ENCODE measurements at regions of chr16 and their contacts with region 1.

Region 1: DNA sequence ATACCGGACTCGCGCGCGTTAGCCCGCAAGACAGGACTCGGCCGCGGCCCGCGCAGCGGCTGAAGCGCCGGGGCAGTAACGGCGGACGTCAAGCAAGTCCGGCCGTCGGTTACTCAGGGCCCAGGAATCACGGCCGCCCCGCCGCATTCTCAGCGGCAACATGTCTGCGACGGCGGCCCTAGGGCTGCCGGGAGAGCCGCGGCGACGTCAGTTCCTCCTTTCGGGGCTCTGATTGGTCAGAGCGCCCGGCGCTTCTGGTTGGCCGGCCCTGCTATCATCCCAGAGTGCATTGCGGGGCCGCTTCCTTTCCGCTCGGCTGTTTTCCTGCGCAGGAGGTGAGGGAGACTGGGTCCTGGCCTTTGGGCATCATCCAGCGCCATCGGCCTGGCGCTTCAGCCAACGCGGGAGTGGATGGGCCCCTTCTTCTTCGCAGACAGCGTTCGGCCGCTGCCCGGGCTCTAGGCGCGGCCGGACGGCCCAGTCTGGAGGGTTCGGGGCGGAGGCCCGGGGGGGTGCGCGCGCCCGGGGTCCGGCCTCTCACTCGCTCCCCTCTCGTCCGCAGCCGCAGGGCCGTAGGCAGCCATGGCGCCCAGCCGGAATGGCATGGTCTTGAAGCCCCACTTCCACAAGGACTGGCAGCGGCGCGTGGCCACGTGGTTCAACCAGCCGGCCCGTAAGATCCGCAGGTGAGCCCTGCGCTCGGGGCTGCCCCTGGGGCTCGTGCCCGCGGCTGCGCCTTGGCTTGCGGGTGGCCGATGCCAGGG is at the start of gene RPL13:
- DNase-seq: peak; percentile 95 to 97
- H3K4me3 ChIP-seq: peak within 1 kb of the TSS; percentile 78 to 86 (median 85)
- H3K27ac ChIP-seq: peak within 1 kb of the TSS; percentile 96 to 97
- H3K4me1 ChIP-seq: peaks cover 5 to 7% of the 10 kb centered on the region in 2 donors
- H3K27me3 ChIP-seq: no peaks in the 10 kb centered on the region
- CTCF ChIP-seq: peak in 1 of 3 donors; percentile 6
- POLR2A ChIP-seq: peak; percentile 95
- total RNA-seq, gene RPL13: 5,075 to 6,295 (median 5,484) TPM

Region 2: GRCh38 chr16:87661561-87661960 is 1899.0 kb before region 1 on chr16:
- intact Hi-C with region 1: loop called (anchors 5 kb)
- DNase-seq: no peak
- H3K4me3 ChIP-seq: no peak overlapping the region
- H3K27ac ChIP-seq: no peak overlapping the region
- H3K4me1 ChIP-seq: no peaks in the 10 kb centered on the region
- H3K27me3 ChIP-seq: peaks cover 0 to 51% of the 10 kb centered on the region in 2 donors
- CTCF ChIP-seq: no peak
- POLR2A ChIP-seq: no peak

Region 3: GRCh38 chr16:89507834-89508590 is 52.5 kb before region 1 on chr16 and contains the start of gene SPG7:
- intact Hi-C with region 1: loop called (anchors 10 kb)
- DNase-seq: peak; percentile 76 to 78
- H3K4me3 ChIP-seq: peak within 1 kb of the TSS; percentile 79 to 94 (median 80)
- H3K27ac ChIP-seq: peak within 1 kb of the TSS; percentile 87 to 93
- H3K4me1 ChIP-seq: peaks cover 9 to 17% of the 10 kb centered on the region in 2 donors
- H3K27me3 ChIP-seq: no peaks in the 10 kb centered on the region
- CTCF ChIP-seq: no peak
- POLR2A ChIP-seq: no peak
- total RNA-seq, gene SPG7: 104 to 126 (median 118) TPM

Region 4: GRCh38 chr16:89860747-89861304 is 300.3 kb after region 1 on chr16:
- intact Hi-C with region 1: loop called (anchors 5 kb)
- DNase-seq: peak in 1 of 2 donors; percentile 70
- H3K4me3 ChIP-seq: no peak overlapping the region
- H3K27ac ChIP-seq: no peak overlapping the region
- H3K4me1 ChIP-seq: no peaks in the 10 kb centered on the region
- H3K27me3 ChIP-seq: no peaks in the 10 kb centered on the region
- CTCF ChIP-seq: peak; percentile 88 to 95 (median 92)
- POLR2A ChIP-seq: no peak